ENCODE measurements at regions of chr20 and their contacts with region 1.

Region 1: DNA sequence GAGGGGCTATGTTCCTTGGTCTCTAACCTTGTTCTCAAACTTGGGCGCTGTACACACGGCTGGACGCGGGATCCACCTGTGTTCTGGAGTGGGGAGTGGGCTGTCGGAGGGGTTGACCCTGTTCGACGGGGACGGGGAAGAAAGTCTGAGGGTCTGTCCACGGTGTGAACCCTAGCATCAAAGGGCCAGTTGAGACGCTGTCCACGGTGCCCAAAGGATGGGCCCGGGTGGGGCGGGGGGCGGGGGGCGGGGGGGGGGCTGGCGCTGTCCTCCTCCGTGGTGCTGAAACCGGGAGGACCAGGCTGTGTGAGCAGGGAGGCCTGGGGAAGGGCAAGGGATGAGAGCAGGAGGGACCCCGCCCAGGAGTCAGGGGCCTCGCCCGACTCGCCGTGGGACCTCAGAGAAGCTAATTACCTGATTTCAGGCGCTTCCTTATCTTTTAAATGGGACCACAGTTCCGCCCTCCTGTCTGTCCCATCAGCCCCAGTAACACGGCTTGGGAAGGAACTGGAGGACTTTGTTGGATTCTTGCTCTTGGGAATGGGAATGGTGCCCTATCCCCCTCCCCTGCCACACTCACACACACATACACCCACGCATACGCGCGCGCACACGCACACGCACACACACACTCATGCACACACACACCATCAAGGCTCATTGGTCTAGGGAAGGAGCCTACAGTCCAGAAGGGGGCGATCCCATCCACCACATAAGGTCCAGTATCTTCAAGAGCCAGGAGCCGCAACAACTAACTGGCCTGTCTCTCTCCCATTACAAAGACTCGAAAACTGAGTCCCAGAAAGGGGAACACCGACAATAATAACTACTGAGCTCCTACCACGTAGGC is 1.0 kb upstream of the VSTM2L start:
- DNase-seq: peak in 6 of 10 donors; percentile 25 to 65 (median 46)
- H3K4me3 ChIP-seq: peak overlapping the region in 52 of 59 donors; percentile 39 to 72 (median 58)
- H3K27ac ChIP-seq: no peak overlapping the region
- H3K27me3 ChIP-seq: peaks cover 0 to 48% (median 16%) of the 10 kb centered on the region in 45 donors
- CTCF ChIP-seq: peak in 47 of 56 donors; percentile 17 to 50 (median 35)

Region 2: DNA sequence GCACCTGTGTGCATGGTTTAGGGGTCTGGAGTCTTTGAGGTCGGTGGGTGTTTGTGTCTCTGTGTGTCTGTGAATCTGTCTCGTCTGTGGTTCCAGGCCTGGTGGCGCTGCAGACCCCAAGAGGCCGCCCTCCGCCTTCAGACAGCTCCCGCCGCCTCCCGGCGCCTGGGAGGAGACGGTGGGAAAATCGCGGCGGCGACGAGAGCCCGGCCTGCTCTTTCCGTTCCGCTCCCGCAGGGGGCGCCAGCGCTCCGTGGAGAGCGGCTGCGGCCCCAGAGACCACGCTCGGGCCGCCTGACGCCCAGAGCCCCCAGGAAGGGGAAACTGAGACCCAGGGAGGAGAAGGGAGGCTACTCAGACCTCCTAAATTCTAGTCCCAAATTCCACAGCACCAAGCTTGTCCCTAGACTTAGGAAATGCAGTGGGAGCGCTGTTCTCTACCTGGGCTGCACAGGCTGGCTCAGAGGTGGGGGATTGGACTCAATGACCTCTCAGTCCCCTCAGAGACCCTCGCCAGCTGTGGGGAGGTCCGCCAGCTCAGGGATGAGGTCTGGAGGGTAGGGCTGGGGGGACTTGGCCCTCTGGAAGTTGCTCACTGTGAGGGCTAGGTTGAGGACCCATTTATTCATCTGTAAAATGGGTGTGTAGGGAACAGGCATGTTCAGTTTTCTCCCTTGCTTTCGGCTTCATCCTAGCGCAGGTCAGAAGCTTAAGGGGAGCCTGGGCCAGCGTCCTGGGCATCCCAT is 337.3 kb before region 1 on chr20:
- intact Hi-C with region 1: loop called in 1 of 2 experiments (anchors 10 kb)
- DNase-seq: peak in 6 of 10 donors; percentile 20 to 79 (median 42)
- H3K4me3 ChIP-seq: peak overlapping the region in 10 of 59 donors; percentile 4 to 40 (median 20)
- H3K27ac ChIP-seq: no peak overlapping the region
- H3K27me3 ChIP-seq: peaks cover 0 to 32% (median 6%) of the 10 kb centered on the region in 45 donors
- CTCF ChIP-seq: peak; percentile 65 to 92 (median 84)

Region 3: GRCh38 chr20:38023181-38024001 is 121.5 kb after region 1 on chr20:
- intact Hi-C with region 1: no loop called
- DNase-seq: no peak
- H3K4me3 ChIP-seq: no peak overlapping the region
- H3K27ac ChIP-seq: no peak overlapping the region
- H3K27me3 ChIP-seq: no peaks in the 10 kb centered on the region
- CTCF ChIP-seq: no peak